Natural killer cell (primary cell): ENCODE measurements at regions of chr3 and their contacts with region 1.

Region 1: GRCh38 chr3:123559040-123559861 is 25.6 kb downstream of the HACD2 start:
- DNase-seq: peak in 1 of 2 donors; percentile 79
- ATAC-seq: peak; percentile 42 to 60 (median 52)
- H3K4me3 ChIP-seq: no peak overlapping the region
- H3K4me3 Mint-ChIP-seq: no peak overlapping the region
- H3K27ac ChIP-seq: no peak overlapping the region
- H3K27ac Mint-ChIP-seq: no peak overlapping the region
- H3K4me1 ChIP-seq: no peaks in the 10 kb centered on the region
- H3K4me1 Mint-ChIP-seq: peaks cover 5 to 18% of the 10 kb centered on the region in 2 donors
- H3K27me3 ChIP-seq: no peaks in the 10 kb centered on the region
- H3K27me3 Mint-ChIP-seq: no peaks in the 10 kb centered on the region
- CTCF ChIP-seq: peak; percentile 95

Region 2: DNA sequence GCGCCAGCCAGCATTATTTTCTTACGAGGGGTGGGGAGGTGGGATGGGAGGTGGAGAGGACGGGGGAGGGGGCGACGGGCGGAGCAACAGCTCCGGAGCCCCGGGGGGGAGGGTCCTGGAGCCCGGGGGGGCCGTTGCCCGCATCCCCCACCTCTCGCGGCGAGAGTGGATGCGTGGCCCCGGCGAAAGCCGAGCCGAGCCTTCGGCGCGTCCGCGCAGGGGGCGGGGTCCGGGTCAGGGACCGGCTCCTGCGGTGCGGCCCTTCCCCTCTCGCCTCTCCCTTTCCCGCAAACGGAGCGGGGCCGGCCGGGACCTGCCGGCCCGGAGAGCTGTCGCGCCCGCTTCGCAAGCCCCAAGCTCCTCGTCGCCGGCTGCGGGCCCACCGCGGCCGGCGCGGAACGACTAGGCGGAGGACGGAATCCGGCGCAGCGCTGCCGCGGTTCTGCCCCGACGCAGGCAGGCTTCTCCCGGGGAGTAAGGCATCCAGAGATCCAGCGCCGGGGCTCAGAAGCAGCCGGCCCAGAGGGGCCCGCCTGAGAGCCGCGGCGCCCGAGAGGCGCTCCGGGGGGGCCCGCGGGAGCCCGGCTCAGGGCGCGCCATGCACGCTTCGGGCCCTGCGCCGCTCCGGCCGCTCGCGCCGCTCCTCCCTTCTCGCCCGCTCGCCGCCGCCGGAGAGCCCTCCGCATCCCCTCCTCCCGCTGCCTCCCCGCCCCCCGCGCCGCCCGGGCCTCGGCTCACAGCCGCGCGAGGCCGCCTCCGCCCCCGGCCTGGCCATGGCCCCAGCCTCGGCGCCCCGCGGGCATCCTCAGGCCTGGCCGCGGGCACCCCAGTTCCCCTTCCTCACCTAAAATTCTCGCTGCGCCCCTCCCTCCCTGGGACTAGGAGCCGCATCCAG is 109.9 kb before region 1 on chr3:
- intact Hi-C with region 1: loop called (anchors 10 kb)
- DNase-seq: peak in 1 of 2 donors; percentile 26
- ATAC-seq: peak in 2 of 3 donors; percentile 46 to 57
- H3K4me3 ChIP-seq: no peak overlapping the region
- H3K4me3 Mint-ChIP-seq: peak overlapping the region; percentile 76
- H3K27ac ChIP-seq: no peak overlapping the region
- H3K27ac Mint-ChIP-seq: no peak overlapping the region
- H3K4me1 ChIP-seq: peaks cover 9% of the 10 kb centered on the region
- H3K4me1 Mint-ChIP-seq: peaks cover 0 to 6% of the 10 kb centered on the region in 2 donors
- H3K27me3 ChIP-seq: peaks cover 20% of the 10 kb centered on the region
- H3K27me3 Mint-ChIP-seq: peaks cover 42 to 52% of the 10 kb centered on the region in 2 donors
- CTCF ChIP-seq: no peak